Mammary epithelial cell (primary cell): ENCODE measurements at regions of chrX and their contacts with region 1.

Region 1: GRCh38 chrX:54439967-54440871 is at the start of gene TSR2:
- DNase-seq: peak; percentile 77
- H3K4me3 ChIP-seq: peak within 1 kb of the TSS; percentile 61 to 73 (median 65)
- H3K27ac ChIP-seq: peak within 1 kb of the TSS; percentile 46
- H3K4me1 ChIP-seq: no peaks in the 10 kb centered on the region
- H3K27me3 ChIP-seq: no peaks in the 10 kb centered on the region
- CTCF ChIP-seq: peak in 1 of 2 donors; percentile 25
- total RNA-seq, gene TSR2: 8.0 to 33.8 TPM

Region 2: DNA sequence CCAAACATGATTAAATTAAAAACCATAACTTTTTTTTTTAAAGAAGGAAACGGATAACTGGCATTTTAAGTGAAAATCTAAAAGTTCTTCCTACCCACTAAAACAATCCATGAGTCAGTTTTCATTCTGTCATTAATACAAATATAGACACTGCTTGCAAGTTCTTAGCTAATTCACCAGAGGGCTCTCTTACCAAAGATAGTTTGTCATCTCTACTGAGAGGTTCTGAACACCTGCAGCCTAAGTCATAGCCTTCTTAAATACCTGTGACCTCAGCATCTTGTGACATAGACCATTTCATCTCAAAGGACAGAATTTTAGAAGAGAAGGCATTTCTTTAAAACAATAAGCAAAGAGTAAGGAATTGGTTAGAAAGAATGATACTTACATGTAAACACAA is 191.9 kb before region 1 on chrX:
- CTCF ChIA-PET with region 1: interaction called, 3 read pairs
- dilution Hi-C with region 1: no loop called
- in situ Hi-C with region 1: no loop called
- intact Hi-C with region 1: loop called (anchors 1 kb)
- DNase-seq: peak; percentile 28
- H3K4me3 ChIP-seq: no peak overlapping the region
- H3K27ac ChIP-seq: no peak overlapping the region
- H3K4me1 ChIP-seq: no peaks in the 10 kb centered on the region
- H3K27me3 ChIP-seq: no peaks in the 10 kb centered on the region
- CTCF ChIP-seq: peak; percentile 32 to 61